WTC11 (cell line): ENCODE measurements at regions of chr18 and their contacts with region 1.

Region 1: GRCh38 chr18:31424383-31424988 is 23.1 kb upstream of the DSG3 start:
- DNase-seq: peak; percentile 72
- ATAC-seq: peak; percentile 99
- H3K4me3 Mint-ChIP-seq: no peak overlapping the region
- H3K27ac Mint-ChIP-seq: no peak overlapping the region
- H3K4me1 Mint-ChIP-seq: peaks cover 9% of the 10 kb centered on the region
- H3K27me3 Mint-ChIP-seq: no peaks in the 10 kb centered on the region
- CTCF ChIP-seq: peak; percentile 86

Region 2: DNA sequence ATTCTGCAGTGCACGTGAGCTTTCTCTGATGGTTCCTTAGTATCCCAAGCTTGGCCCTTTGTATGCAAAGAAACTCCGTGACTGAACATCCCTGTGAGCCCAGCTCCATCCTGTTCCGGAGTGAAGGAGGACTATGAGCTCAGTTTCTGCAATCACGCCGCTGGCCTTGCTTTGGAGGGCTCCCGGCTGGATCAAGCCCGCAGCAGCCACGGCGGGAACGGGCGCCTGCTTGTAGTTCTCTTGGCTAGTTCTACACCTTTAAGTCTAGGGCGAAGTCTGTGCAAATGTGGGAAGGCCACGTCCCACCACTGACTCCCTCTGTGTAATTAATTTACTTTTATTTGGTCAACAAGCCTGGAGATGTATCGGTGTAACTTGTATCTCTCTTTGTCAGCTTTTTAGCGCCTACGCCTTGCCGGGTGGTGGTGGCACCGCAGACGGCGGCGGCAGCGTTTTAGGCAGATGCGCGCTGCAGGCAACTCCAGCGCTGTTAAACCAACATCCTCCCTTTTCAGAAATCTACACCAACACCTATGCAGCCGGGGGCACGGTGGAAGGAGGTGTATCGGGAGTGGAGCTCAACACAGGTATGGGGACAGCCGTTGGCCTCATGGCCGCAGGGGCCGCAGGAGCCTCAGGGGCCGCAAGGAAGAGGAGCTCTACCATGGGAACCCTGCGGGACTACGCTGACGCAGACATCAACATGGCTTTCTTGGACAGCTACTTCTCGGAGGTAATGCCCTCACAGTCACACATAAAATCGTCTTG is 13.6 kb before region 1 on chr18:
- CTCF ChIA-PET with region 1: interaction called, 14 read pairs
- POLR2A ChIA-PET with region 1: no interaction called
- DNase-seq: no peak
- ATAC-seq: peak; percentile 58
- H3K4me3 Mint-ChIP-seq: no peak overlapping the region
- H3K27ac Mint-ChIP-seq: no peak overlapping the region
- H3K4me1 Mint-ChIP-seq: no peaks in the 10 kb centered on the region
- H3K27me3 Mint-ChIP-seq: no peaks in the 10 kb centered on the region
- CTCF ChIP-seq: no peak

Region 3: GRCh38 chr18:31500051-31500688 is 75.7 kb after region 1 on chr18:
- CTCF ChIA-PET with region 1: interaction called, 12 read pairs
- POLR2A ChIA-PET with region 1: no interaction called
- DNase-seq: no peak
- ATAC-seq: no peak
- H3K4me3 Mint-ChIP-seq: peak overlapping the region; percentile 95
- H3K27ac Mint-ChIP-seq: no peak overlapping the region
- H3K4me1 Mint-ChIP-seq: peaks cover 35% of the 10 kb centered on the region
- H3K27me3 Mint-ChIP-seq: peaks cover 10% of the 10 kb centered on the region
- CTCF ChIP-seq: no peak

Region 4: GRCh38 chr18:31506024-31506742 is 81.7 kb after region 1 on chr18:
- CTCF ChIA-PET with region 1: interaction called, 11 read pairs
- POLR2A ChIA-PET with region 1: no interaction called
- DNase-seq: no peak
- ATAC-seq: peak; percentile 51; the same call in 1 of the 2 replicates
- H3K4me3 Mint-ChIP-seq: no peak overlapping the region
- H3K27ac Mint-ChIP-seq: no peak overlapping the region; the same call in 1 of the 2 replicates
- H3K4me1 Mint-ChIP-seq: peaks cover 7% of the 10 kb centered on the region
- H3K27me3 Mint-ChIP-seq: no peaks in the 10 kb centered on the region
- CTCF ChIP-seq: no peak

Region 5: DNA sequence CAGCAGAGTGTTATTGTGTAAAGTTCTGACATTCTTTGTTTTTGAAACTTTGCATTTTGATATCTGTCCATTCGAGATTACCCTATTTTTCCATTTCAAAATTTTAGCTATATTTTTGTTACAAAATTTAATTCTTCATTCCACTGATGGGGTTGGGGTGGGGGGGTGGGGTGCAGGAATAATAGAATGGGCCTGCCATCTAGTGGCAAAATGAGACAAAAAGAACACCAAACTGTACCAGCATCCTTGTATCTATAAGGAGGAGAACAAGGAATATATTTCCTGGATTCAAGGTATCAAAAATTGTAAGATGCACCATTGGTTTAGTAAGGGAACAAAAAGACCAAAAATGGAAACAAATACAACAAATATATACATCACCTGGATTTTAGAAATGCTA is 139.3 kb after region 1 on chr18:
- CTCF ChIA-PET with region 1: interaction called, 11 read pairs
- POLR2A ChIA-PET with region 1: no interaction called
- DNase-seq: no peak
- ATAC-seq: no peak
- H3K4me3 Mint-ChIP-seq: no peak overlapping the region
- H3K27ac Mint-ChIP-seq: no peak overlapping the region
- H3K4me1 Mint-ChIP-seq: peaks cover 12% of the 10 kb centered on the region; the same call in 1 of the 2 replicates
- H3K27me3 Mint-ChIP-seq: no peaks in the 10 kb centered on the region
- CTCF ChIP-seq: no peak